GM10248 (cell line): ENCODE measurements at regions of chr2 and their contacts with region 1.

Region 1: GRCh38 chr2:177419274-177419673 is 26.7 kb downstream of the AGPS start:
- DNase-seq: no peak
- CTCF ChIP-seq: no peak

Region 2: GRCh38 chr2:177322801-177323261 is 96.4 kb before region 1 on chr2:
- CTCF ChIA-PET with region 1: no interaction called
- POLR2A ChIA-PET with region 1: no interaction called
- DNase-seq: no peak
- CTCF ChIP-seq: no peak

Region 3: GRCh38 chr2:177352441-177353186 is 66.7 kb before region 1 on chr2:
- CTCF ChIA-PET with region 1: interaction called, 15 read pairs
- POLR2A ChIA-PET with region 1: no interaction called
- DNase-seq: no peak
- CTCF ChIP-seq: no peak

Region 4: DNA sequence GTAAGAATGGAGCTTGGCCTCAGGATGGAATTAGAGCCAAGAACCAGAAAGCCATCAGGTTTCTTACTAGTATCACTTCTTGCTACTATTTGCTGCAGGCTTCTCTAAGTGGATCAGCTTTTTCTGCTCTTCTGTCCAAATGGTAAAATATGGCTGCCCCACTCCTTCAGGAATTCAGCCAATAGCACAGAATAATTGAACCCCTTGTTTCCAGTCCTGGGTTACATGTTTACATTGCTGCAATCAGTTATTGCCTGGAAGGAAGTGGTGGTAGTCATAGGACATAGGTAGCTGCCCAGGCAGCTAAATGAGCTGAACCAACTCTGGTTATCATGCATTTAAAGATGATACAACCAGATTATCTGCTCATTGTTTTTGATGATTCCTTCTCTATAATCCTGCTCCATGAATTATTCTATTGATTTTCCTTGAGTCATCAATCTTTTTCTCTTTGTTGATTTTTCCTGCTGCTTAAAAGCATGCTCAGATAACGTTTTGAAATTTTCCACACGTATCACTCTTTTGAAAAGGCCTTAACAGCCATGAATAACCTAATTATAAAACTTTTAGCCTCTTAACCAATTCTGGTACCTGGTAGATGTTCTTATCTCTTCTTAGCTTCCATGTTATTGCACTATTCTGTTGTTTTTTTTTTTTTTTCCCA is 14.1 kb before region 1 on chr2:
- CTCF ChIA-PET with region 1: interaction called, 42 read pairs
- POLR2A ChIA-PET with region 1: no interaction called
- DNase-seq: no peak
- CTCF ChIP-seq: no peak

Region 5: DNA sequence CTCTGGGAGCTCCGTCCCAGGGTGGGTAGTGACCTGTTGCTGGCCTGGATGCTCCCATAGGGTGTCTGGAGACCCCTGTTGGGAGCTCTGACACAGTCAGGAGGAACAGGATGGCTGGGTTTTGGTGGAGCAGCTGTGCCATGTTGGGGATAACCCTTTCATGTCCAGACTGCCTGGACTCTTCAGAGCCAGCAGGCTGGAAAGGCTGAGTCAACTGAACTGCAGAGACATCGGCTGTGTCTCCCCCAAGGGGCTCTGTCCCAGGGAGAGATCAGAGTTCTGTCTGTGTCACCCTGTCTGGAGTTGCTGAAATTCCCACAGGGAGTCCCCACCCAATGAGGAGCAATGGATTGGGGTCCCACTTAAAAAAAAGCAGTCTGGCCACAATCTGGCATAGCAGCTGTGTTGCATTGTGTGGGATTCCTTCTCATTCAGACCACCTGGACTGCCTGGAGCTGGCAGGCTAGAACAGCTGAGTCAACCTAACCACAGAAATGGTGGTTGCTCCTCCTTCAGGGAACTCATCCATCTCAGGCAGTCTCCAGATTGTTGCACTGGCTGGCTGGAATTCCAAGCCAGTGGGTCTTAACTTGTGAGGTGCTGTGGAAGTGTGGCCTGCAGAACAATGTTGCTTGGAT is 10.5 kb after region 1 on chr2:
- CTCF ChIA-PET with region 1: interaction called, 13 read pairs
- POLR2A ChIA-PET with region 1: no interaction called
- DNase-seq: no peak
- CTCF ChIP-seq: no peak